Body of pancreas (tissue), 4 donors: ENCODE measurements at regions of chr6 and their contacts with region 1.

Region 1: DNA sequence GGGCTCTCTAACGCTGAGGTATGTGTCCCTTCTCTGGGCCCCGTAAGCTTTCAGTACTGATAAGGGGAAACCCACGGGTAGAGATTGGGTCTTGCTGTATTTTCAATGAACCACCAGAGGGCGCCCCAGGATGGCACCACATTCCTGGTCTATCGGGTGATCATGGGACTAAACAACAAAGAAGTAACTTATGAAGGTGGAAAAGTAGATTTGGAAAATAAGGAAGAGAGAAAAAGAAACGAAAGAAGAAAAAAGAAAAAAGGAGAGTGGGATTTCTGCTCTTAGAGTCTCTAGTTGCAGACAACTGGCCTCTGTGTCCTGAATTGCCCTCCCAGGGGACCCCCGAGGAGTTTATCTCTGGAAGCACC is 93.8 kb downstream of the GMPR start:
- DNase-seq: peak; percentile 77 to 84 (median 82)
- ATAC-seq: peak; percentile 88
- H3K4me3 ChIP-seq: no peak overlapping the region
- H3K27ac ChIP-seq: no peak overlapping the region
- H3K4me1 ChIP-seq: peaks cover 9% of the 10 kb centered on the region
- H3K27me3 ChIP-seq: no peaks in the 10 kb centered on the region
- CTCF ChIP-seq: peak; percentile 77 to 93 (median 87)
- POLR2A ChIP-seq: no peak

Region 2: DNA sequence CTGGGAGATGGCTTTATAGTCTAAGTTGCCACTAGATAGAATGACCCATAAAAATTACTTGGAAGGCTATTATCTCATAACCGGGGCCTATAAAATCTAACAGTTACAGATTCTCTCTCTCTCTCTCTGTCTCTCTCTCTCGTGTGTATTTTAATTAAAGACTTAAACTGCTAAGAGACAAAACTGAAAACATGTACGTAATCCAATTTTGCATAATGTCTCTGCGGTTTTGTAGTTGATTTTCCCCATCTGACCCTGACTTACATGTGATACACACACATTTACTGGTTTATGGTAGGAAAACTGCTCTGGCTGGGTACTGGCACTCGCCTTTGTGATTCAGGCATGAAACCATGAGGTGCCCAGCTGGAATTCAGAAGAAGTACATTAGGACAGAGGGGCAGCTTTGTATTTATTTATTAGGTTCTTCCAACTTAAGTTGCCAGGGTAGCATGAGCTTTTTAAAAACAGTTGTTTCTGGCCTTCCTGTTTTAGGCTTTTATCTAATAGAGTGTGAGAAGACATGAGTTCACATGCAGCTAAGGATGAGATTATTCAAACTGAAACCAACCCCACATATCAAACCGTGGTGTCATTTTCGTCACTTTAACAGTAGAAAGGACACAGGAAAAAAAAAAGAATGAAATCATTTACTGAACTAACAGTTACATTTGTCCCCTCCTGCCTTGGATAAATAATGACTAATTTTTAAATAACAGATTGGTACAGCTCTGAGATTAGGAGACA is 88.7 kb after region 1 on chr6:
- intact Hi-C with region 1: no loop called
- DNase-seq: no peak
- ATAC-seq: peak; percentile 40
- H3K4me3 ChIP-seq: no peak overlapping the region
- H3K27ac ChIP-seq: peak overlapping the region; percentile 22 to 44 (median 32)
- H3K4me1 ChIP-seq: peaks cover 29% of the 10 kb centered on the region
- H3K27me3 ChIP-seq: no peaks in the 10 kb centered on the region
- CTCF ChIP-seq: no peak
- POLR2A ChIP-seq: no peak

Region 3: GRCh38 chr6:16503970-16504415 is 171.8 kb after region 1 on chr6:
- intact Hi-C with region 1: loop called (anchors 10 kb)
- DNase-seq: no peak
- ATAC-seq: no peak
- H3K4me3 ChIP-seq: no peak overlapping the region
- H3K27ac ChIP-seq: no peak overlapping the region
- H3K4me1 ChIP-seq: no peaks in the 10 kb centered on the region
- H3K27me3 ChIP-seq: no peaks in the 10 kb centered on the region
- CTCF ChIP-seq: no peak
- POLR2A ChIP-seq: no peak